ENCODE measurements at regions of chr3 and their contacts with region 1.

Region 1: DNA sequence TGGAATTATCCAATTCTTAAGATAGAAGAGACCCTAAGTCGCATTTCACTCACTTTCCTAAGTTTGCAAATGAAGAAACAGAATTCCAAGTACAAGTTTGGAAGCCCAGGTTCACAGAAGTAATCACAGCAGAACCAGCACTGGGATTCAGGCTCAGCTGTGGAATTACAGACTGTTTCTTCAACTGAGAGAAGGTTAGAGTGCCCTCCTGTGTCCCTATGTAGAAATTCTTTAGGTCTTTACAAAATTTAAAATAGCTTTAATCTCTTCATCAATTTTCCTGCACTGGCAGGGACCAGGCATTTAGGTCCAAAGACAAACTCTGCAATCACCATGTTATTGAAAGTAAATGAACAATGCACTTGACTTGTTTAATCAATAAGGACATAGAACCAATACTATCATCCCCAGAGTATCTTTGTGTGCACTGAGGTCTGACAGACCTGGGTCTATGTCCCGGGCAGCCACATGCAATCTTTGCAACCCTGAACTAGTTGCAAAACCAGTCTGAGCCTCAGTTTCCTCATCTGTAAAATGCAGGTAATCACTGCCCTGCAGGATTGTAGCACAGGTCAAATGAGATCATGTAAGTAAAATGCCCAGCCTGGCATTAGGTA is 96.3 kb upstream of the ZBED2 start:
- DNase-seq: peak; percentile 53
- H3K4me3 ChIP-seq: no peak overlapping the region
- H3K27ac ChIP-seq: no peak overlapping the region
- H3K4me1 ChIP-seq: peaks cover 12% of the 10 kb centered on the region
- H3K27me3 ChIP-seq: no peaks in the 10 kb centered on the region
- CTCF ChIP-seq: peak; percentile 17 to 40
- POLR2A ChIP-seq: no peak

Region 2: GRCh38 chr3:111577794-111578685 is 113.4 kb before region 1 on chr3:
- CTCF ChIA-PET with region 1: interaction called, 26 read pairs
- POLR2A ChIA-PET with region 1: no interaction called
- dilution Hi-C with region 1: no loop called
- intact Hi-C with region 1: no loop called
- DNase-seq: peak; percentile 25
- H3K4me3 ChIP-seq: no peak overlapping the region
- H3K27ac ChIP-seq: no peak overlapping the region
- H3K4me1 ChIP-seq: no peaks in the 10 kb centered on the region
- H3K27me3 ChIP-seq: peaks cover 0 to 7% of the 10 kb centered on the region in 2 experiments
- CTCF ChIP-seq: peak; percentile 4 to 15
- POLR2A ChIP-seq: no peak

Region 3: GRCh38 chr3:111616417-111617105 is 74.8 kb before region 1 on chr3:
- CTCF ChIA-PET with region 1: no interaction called
- POLR2A ChIA-PET with region 1: no interaction called
- dilution Hi-C with region 1: no loop called
- intact Hi-C with region 1: no loop called
- DNase-seq: no peak
- H3K4me3 ChIP-seq: no peak overlapping the region
- H3K27ac ChIP-seq: no peak overlapping the region
- H3K4me1 ChIP-seq: no peaks in the 10 kb centered on the region
- H3K27me3 ChIP-seq: peaks cover 2 to 4% of the 10 kb centered on the region in 2 experiments
- CTCF ChIP-seq: no peak
- POLR2A ChIP-seq: no peak

Region 4: GRCh38 chr3:111668912-111669488 is 22.4 kb before region 1 on chr3:
- CTCF ChIA-PET with region 1: interaction called, 15 read pairs
- POLR2A ChIA-PET with region 1: no interaction called
- dilution Hi-C with region 1: no loop called
- intact Hi-C with region 1: loop called (anchors 1 kb)
- DNase-seq: peak; percentile 63
- H3K4me3 ChIP-seq: no peak overlapping the region
- H3K27ac ChIP-seq: peak overlapping the region; percentile 29
- H3K4me1 ChIP-seq: peaks cover 31% of the 10 kb centered on the region
- H3K27me3 ChIP-seq: no peaks in the 10 kb centered on the region
- CTCF ChIP-seq: peak; percentile 61
- POLR2A ChIP-seq: no peak

Region 5: GRCh38 chr3:111676211-111677006 is 15.0 kb before region 1 on chr3:
- CTCF ChIA-PET with region 1: interaction called, 23 read pairs
- POLR2A ChIA-PET with region 1: no interaction called
- dilution Hi-C with region 1: no loop called
- intact Hi-C with region 1: no loop called
- DNase-seq: peak; percentile 80
- H3K4me3 ChIP-seq: peak overlapping the region in 2 of 3 experiments; percentile 18 to 80
- H3K27ac ChIP-seq: peak overlapping the region; percentile 57
- H3K4me1 ChIP-seq: peaks cover 30% of the 10 kb centered on the region
- H3K27me3 ChIP-seq: no peaks in the 10 kb centered on the region
- CTCF ChIP-seq: no peak
- POLR2A ChIP-seq: no peak

Region 6: GRCh38 chr3:111708157-111708771 is 16.9 kb after region 1 on chr3:
- CTCF ChIA-PET with region 1: interaction called, 13 read pairs
- POLR2A ChIA-PET with region 1: no interaction called
- dilution Hi-C with region 1: no loop called
- intact Hi-C with region 1: no loop called
- DNase-seq: no peak
- H3K4me3 ChIP-seq: no peak overlapping the region
- H3K27ac ChIP-seq: no peak overlapping the region
- H3K4me1 ChIP-seq: no peaks in the 10 kb centered on the region
- H3K27me3 ChIP-seq: no peaks in the 10 kb centered on the region
- CTCF ChIP-seq: no peak
- POLR2A ChIP-seq: no peak

Region 7: DNA sequence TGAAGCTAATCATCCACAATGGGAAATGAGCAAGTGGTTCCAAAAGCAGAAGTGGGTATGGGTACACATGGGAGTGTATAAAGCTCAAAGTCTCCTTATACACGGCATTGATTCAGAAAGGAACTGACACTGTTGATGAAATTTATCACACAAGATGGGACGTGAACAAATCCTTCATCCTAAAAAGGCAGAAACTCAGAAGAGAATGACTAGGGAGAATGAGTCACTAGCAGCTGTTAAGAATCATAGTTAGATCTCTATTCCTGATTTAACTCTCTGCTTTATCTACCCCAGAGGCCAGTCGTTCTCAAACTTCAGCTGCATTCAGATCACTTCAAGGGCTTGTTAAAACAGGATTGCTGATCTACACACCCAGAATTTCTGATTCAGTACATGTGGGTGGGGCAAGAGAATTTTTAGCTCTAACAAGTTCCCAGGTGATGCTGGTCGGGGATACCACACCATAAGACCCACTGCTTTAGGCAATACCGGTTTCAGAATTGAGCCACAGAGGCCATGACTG is 70.0 kb after region 1 on chr3:
- CTCF ChIA-PET with region 1: no interaction called
- POLR2A ChIA-PET with region 1: no interaction called
- dilution Hi-C with region 1: no loop called
- intact Hi-C with region 1: no loop called
- DNase-seq: peak; percentile 29
- H3K4me3 ChIP-seq: no peak overlapping the region
- H3K27ac ChIP-seq: no peak overlapping the region
- H3K4me1 ChIP-seq: no peaks in the 10 kb centered on the region
- H3K27me3 ChIP-seq: no peaks in the 10 kb centered on the region
- CTCF ChIP-seq: no peak
- POLR2A ChIP-seq: no peak

Measured in endothelial cell of umbilical vein (primary cell).